Dorsolateral prefrontal cortex (tissue), 120 donors: ENCODE measurements at regions of chr4 and their contacts with region 1.

Region 1: GRCh38 chr4:25814301-25815136 is 48.3 kb downstream of the SEL1L3 start:
- DNase-seq: peak in 5 of 10 donors; percentile 47 to 66 (median 52)
- H3K4me3 ChIP-seq: no peak overlapping the region
- H3K27ac ChIP-seq: peak overlapping the region in 22 of 59 donors; percentile 11 to 72 (median 32)
- H3K27me3 ChIP-seq: no peaks in the 10 kb centered on the region
- CTCF ChIP-seq: no peak

Region 2: DNA sequence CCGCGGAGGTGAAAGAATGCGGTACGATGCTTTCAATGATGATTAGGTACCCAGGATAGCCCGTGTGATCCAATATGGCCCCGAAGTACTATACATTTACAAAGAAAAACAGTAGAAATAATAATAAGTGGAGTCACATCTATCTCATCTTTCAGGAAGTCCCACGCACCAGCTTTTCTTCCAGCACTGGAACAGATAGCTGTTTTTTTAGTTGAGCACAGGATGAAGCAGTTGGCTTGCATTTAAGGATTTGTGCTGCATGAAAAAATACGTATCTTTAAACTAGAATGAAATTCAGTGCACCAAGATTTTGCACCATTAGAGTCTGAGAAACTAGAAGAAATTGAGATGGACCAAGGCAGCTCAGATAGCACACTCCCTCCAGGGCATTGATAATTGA is 143.6 kb after region 1 on chr4:
- intact Hi-C with region 1: loop called in 1 of 2 experiments (anchors 5 kb)
- DNase-seq: peak in 1 of 10 donors; percentile 59
- H3K4me3 ChIP-seq: no peak overlapping the region
- H3K27ac ChIP-seq: peak overlapping the region in 29 of 59 donors; percentile 12 to 78 (median 52)
- H3K27me3 ChIP-seq: no peaks in the 10 kb centered on the region
- CTCF ChIP-seq: no peak